ENCODE measurements at regions of chr12 and their contacts with region 1.

Region 1: DNA sequence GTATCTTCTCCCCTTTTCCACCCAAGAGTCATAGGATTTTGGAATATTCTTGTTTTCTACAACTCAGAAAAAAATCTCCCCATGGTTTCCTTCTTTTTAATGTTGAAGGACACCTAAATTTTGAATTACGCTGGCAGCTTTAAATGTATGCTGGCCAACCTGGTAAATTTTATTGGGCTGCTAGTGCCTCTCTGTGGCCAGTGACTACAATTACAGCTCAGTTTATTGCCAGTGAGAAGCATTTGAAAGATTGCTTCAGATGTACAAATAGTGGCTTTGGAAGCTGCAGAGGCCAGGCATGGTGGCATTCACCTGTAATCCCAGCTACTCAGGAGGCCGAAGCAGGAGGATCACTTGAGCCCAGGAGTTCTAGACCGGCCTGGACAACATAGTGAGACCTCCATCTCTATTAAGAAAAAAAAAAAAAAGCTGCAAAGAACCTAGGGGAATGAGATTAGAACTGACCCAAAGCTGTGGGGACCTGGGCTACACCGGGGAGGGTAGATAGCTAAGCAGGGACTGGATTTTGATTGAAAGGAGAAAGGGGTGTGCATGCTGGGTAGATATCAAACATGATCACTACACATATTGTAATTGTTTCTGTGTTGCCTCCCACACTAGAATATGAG is 7.6 kb upstream of the RAB21 start:
- DNase-seq: peak; percentile 55
- H3K4me3 Mint-ChIP-seq: no peak overlapping the region
- H3K27ac Mint-ChIP-seq: no peak overlapping the region
- H3K4me1 Mint-ChIP-seq: peaks cover 2% of the 10 kb centered on the region
- H3K27me3 Mint-ChIP-seq: peaks cover 1% of the 10 kb centered on the region

Region 2: DNA sequence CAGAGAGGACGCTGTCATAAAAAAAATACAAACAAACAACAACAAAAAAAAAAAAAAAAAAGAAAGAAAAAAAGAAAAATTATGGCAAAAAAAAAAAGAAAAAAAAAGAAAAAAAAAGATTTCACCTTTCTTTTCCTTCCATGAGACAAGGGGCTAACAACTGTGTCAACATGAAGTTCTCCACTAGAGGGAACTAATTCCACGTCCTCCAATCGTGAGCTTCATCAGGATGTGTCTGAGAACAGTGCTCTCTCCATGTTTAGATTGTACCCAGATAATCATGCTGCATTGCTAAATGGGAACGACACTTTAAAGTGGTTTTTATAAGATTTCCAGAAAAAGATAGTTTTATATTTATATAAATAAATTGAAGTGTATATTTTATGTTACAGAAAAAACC is 1013.7 kb before region 1 on chr12:
- CTCF ChIA-PET with region 1: no interaction called
- POLR2A ChIA-PET with region 1: no interaction called
- intact Hi-C with region 1: loop called (anchors 5 kb)
- DNase-seq: no peak
- H3K4me3 Mint-ChIP-seq: no peak overlapping the region
- H3K27ac Mint-ChIP-seq: no peak overlapping the region
- H3K4me1 Mint-ChIP-seq: no peaks in the 10 kb centered on the region
- H3K27me3 Mint-ChIP-seq: no peaks in the 10 kb centered on the region

Region 3: GRCh38 chr12:71415336-71416231 is 331.5 kb before region 1 on chr12:
- CTCF ChIA-PET with region 1: interaction called, 132 read pairs
- POLR2A ChIA-PET with region 1: interaction called, 3 read pairs
- intact Hi-C with region 1: loop called (anchors 1 kb)
- DNase-seq: peak; percentile 16
- H3K4me3 Mint-ChIP-seq: no peak overlapping the region
- H3K27ac Mint-ChIP-seq: no peak overlapping the region
- H3K4me1 Mint-ChIP-seq: no peaks in the 10 kb centered on the region
- H3K27me3 Mint-ChIP-seq: no peaks in the 10 kb centered on the region

Region 4: DNA sequence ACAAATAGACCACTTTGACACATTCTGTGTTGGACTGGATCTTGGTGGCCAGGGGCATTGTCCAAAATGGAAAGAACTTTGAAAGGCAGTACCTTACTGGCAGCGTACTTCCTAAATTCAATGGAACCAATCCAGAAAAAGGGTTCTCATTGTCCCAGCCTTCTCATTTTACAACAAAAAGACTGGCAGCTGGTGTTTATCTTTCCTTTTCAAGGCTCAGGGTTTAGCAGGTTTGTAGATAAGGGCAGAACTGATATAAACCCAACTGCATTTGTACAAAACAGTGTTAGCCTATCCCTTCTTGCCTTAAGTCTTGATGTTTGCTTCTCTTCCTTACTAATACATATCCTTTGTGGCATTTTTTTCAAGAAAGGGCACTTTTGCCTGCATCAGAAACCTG is 75.3 kb before region 1 on chr12:
- CTCF ChIA-PET with region 1: interaction called, 11 read pairs
- POLR2A ChIA-PET with region 1: no interaction called
- intact Hi-C with region 1: no loop called
- DNase-seq: no peak
- H3K4me3 Mint-ChIP-seq: no peak overlapping the region
- H3K27ac Mint-ChIP-seq: no peak overlapping the region
- H3K4me1 Mint-ChIP-seq: peaks cover 16% of the 10 kb centered on the region
- H3K27me3 Mint-ChIP-seq: no peaks in the 10 kb centered on the region

Region 5: GRCh38 chr12:71804505-71804904 is 57.4 kb after region 1 on chr12:
- CTCF ChIA-PET with region 1: no interaction called
- POLR2A ChIA-PET with region 1: no interaction called
- intact Hi-C with region 1: no loop called
- DNase-seq: no peak
- H3K4me3 Mint-ChIP-seq: no peak overlapping the region
- H3K27ac Mint-ChIP-seq: no peak overlapping the region
- H3K4me1 Mint-ChIP-seq: no peaks in the 10 kb centered on the region
- H3K27me3 Mint-ChIP-seq: peaks cover 12% of the 10 kb centered on the region

Measured in activated CD4-positive, alpha-beta memory T cell treated with anti-CD3 and anti-CD28 coated beads for 36 hours (primary cell).